IMR-90 (cell line): ENCODE measurements at regions of chr20 and their contacts with region 1.

Region 1: GRCh38 chr20:38859070-38859690 is 53.7 kb downstream of the PPP1R16B start:
- DNase-seq: no peak
- ATAC-seq: no peak
- H3K4me3 ChIP-seq: no peak overlapping the region
- H3K27ac ChIP-seq: no peak overlapping the region
- H3K4me1 ChIP-seq: no peaks in the 10 kb centered on the region
- H3K27me3 ChIP-seq: no peaks in the 10 kb centered on the region; the same call in none of the 2 replicates
- CTCF ChIP-seq: no peak
- POLR2A ChIP-seq: no peak
- RAD21 ChIP-seq: no peak

Region 2: GRCh38 chr20:38748097-38748860 is 110.9 kb before region 1 on chr20 and contains the start of gene ACTR5:
- CTCF ChIA-PET with region 1: no interaction called
- POLR2A ChIA-PET with region 1: no interaction called
- dilution Hi-C with region 1: no loop called
- in situ Hi-C with region 1: no loop called
- intact Hi-C with region 1: no loop called
- DNase-seq: peak; percentile 80
- ATAC-seq: peak; percentile 96
- H3K4me3 ChIP-seq: peak within 1 kb of the TSS; percentile 84
- H3K27ac ChIP-seq: peak within 1 kb of the TSS; percentile 81
- H3K4me1 ChIP-seq: peaks cover 5% of the 10 kb centered on the region; the same call in 1 of the 2 replicates
- H3K27me3 ChIP-seq: peaks cover 5% of the 10 kb centered on the region; the same call in 1 of the 2 replicates
- CTCF ChIP-seq: no peak
- POLR2A ChIP-seq: peak; percentile 27; the same call in 1 of the 2 replicates
- RAD21 ChIP-seq: no peak
- total RNA-seq, gene ACTR5: 5.3 and 6.6 TPM in 2 replicates

Region 3: GRCh38 chr20:38840053-38840893 is 18.9 kb before region 1 on chr20:
- CTCF ChIA-PET with region 1: no interaction called
- POLR2A ChIA-PET with region 1: interaction called, 17 read pairs
- dilution Hi-C with region 1: no loop called
- in situ Hi-C with region 1: no loop called
- intact Hi-C with region 1: no loop called
- DNase-seq: no peak
- ATAC-seq: no peak
- H3K4me3 ChIP-seq: no peak overlapping the region
- H3K27ac ChIP-seq: no peak overlapping the region
- H3K4me1 ChIP-seq: no peaks in the 10 kb centered on the region
- H3K27me3 ChIP-seq: peaks cover 3% of the 10 kb centered on the region; the same call in 1 of the 2 replicates
- CTCF ChIP-seq: no peak
- POLR2A ChIP-seq: no peak
- RAD21 ChIP-seq: no peak

Region 4: GRCh38 chr20:38973645-38974044 is 114.5 kb after region 1 on chr20:
- CTCF ChIA-PET with region 1: no interaction called
- POLR2A ChIA-PET with region 1: no interaction called
- dilution Hi-C with region 1: no loop called
- in situ Hi-C with region 1: no loop called
- intact Hi-C with region 1: no loop called
- DNase-seq: peak; percentile 77
- ATAC-seq: peak; percentile 79
- H3K4me3 ChIP-seq: peak overlapping the region; percentile 19; the same call in 1 of the 2 replicates
- H3K27ac ChIP-seq: peak overlapping the region; percentile 77
- H3K4me1 ChIP-seq: peaks cover 23% of the 10 kb centered on the region
- H3K27me3 ChIP-seq: no peaks in the 10 kb centered on the region
- CTCF ChIP-seq: no peak
- POLR2A ChIP-seq: no peak
- RAD21 ChIP-seq: no peak